ENCODE measurements at regions of chr4 and their contacts with region 1.

Region 1: GRCh38 chr4:118968005-118968404 is 79.4 kb downstream of the SYNPO2 start:
- DNase-seq: peak; percentile 62
- CTCF ChIP-seq: no peak

Region 2: DNA sequence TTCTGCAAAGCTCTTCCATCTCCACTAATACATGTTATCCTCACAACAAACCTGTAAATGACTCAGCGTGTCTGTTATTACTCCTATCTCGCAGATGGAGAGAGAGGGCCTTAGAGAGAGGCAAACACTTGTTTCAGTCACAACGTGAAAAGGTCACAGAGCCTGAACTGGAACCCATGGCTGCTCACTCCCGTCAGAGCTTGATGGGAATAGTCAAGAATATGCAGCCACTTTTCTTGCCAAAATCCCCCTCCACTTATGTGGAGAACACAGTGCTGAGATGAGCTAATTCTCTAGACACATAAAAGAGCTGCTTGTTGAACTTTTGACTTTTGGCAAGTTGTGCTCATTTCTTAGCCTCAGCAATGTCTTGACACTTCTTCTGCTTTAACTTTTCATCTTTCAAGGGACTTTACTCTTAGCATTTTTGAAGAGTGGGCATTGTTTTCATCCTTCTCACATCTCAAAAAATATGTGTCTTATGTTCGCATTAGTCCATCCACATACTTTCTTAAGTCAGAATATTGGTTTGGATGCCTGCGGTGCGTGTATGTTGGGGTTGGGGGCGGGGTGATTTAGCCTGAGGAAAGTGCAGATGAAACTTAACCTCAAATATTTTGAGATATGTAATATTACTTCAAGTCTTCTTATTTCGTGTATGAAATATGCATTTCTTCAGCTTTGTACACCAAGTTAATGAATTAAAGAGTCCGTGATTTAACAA is 10.1 kb before region 1 on chr4:
- CTCF ChIA-PET with region 1: interaction called, 16 read pairs
- POLR2A ChIA-PET with region 1: no interaction called
- DNase-seq: no peak
- CTCF ChIP-seq: no peak